ENCODE measurements at regions of chr16 and their contacts with region 1.

Region 1: GRCh38 chr16:24054741-24055491 is 201.2 kb upstream of the CACNG3 start:
- DNase-seq: no peak
- H3K4me3 Mint-ChIP-seq: no peak overlapping the region
- H3K27ac Mint-ChIP-seq: no peak overlapping the region
- H3K4me1 Mint-ChIP-seq: no peaks in the 10 kb centered on the region
- H3K27me3 Mint-ChIP-seq: no peaks in the 10 kb centered on the region

Region 2: DNA sequence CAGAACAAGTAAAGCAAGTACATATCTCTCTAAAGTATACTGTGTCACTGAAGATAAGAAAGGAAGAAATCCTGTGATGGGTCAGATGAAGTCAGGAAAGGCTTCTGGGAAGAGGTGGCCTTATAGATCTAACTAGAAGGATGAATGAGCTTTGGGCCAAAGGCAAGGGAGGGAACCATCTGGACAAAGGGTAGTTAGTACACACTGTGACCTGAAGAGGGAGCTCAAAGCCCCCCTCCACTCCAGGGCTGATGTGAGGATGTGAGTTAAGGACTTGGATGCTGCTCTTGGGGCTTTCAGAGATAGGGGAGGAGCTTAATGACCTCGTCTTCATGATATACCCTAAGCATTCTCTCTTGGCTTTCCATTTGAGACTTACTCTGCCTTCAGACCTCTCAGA is 15.9 kb after region 1 on chr16:
- CTCF ChIA-PET with region 1: interaction called, 13 read pairs
- POLR2A ChIA-PET with region 1: no interaction called
- intact Hi-C with region 1: no loop called
- DNase-seq: peak; percentile 66
- H3K4me3 Mint-ChIP-seq: no peak overlapping the region
- H3K27ac Mint-ChIP-seq: no peak overlapping the region
- H3K4me1 Mint-ChIP-seq: peaks cover 39% of the 10 kb centered on the region
- H3K27me3 Mint-ChIP-seq: no peaks in the 10 kb centered on the region

Measured in activated CD4-positive, alpha-beta memory T cell treated with anti-CD3 and anti-CD28 coated beads for 36 hours (primary cell).